Spleen (tissue), 13 donors: ENCODE measurements at regions of chr12 and their contacts with region 1.

Region 1: DNA sequence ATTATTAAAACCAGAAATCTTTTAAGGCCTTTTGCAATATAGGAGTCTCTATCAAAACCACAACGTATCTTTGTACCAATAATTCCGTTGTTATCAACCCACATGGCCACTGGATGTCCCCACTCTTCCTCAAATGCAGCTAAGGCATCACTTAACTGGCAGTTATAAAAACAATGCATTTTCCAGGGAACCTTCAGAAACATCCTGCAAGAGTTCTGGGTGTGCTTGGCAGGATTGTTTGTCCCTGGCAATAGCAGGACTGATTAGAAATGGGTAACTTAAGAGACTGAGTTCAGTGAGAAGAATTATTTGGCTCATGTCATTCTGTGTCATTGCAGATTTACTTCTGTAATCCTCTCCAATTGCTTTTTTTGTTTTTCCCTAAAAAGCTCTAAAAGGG is 112.0 kb downstream of the SLC15A5 start:
- DNase-seq: no peak
- H3K4me3 ChIP-seq: no peak overlapping the region
- H3K27ac ChIP-seq: no peak overlapping the region
- H3K4me1 ChIP-seq: no peaks in the 10 kb centered on the region
- H3K27me3 ChIP-seq: no peaks in the 10 kb centered on the region
- CTCF ChIP-seq: peak in 1 of 11 experiments; percentile 46
- POLR2A ChIP-seq: no peak

Region 2: DNA sequence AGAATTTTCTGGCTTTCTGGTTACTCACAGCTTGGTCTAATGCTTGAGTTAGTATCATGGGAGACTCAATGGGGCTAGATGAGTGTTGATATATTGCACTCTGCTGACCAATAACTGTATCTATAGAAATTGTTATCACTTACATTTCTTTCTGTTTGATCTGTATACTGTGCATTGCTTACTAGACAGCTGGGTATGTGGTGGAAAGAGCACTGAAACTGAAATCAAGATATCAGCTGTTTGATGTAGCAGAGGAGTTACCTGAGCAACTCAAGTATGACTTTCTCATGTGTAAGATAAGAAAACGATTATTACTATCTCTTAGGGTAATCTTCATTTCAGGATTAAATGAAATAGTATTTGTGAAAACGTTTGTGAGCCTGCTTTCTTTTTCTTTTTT is 71.1 kb before region 1 on chr12:
- intact Hi-C with region 1: no loop called
- DNase-seq: no peak
- H3K4me3 ChIP-seq: no peak overlapping the region
- H3K27ac ChIP-seq: no peak overlapping the region
- H3K4me1 ChIP-seq: no peaks in the 10 kb centered on the region
- H3K27me3 ChIP-seq: no peaks in the 10 kb centered on the region
- CTCF ChIP-seq: no peak
- POLR2A ChIP-seq: no peak

Region 3: GRCh38 chr12:16272222-16272621 is 106.7 kb after region 1 on chr12:
- intact Hi-C with region 1: no loop called
- DNase-seq: no peak
- H3K4me3 ChIP-seq: no peak overlapping the region
- H3K27ac ChIP-seq: no peak overlapping the region
- H3K4me1 ChIP-seq: no peaks in the 10 kb centered on the region
- H3K27me3 ChIP-seq: no peaks in the 10 kb centered on the region
- CTCF ChIP-seq: no peak
- POLR2A ChIP-seq: no peak

Region 4: DNA sequence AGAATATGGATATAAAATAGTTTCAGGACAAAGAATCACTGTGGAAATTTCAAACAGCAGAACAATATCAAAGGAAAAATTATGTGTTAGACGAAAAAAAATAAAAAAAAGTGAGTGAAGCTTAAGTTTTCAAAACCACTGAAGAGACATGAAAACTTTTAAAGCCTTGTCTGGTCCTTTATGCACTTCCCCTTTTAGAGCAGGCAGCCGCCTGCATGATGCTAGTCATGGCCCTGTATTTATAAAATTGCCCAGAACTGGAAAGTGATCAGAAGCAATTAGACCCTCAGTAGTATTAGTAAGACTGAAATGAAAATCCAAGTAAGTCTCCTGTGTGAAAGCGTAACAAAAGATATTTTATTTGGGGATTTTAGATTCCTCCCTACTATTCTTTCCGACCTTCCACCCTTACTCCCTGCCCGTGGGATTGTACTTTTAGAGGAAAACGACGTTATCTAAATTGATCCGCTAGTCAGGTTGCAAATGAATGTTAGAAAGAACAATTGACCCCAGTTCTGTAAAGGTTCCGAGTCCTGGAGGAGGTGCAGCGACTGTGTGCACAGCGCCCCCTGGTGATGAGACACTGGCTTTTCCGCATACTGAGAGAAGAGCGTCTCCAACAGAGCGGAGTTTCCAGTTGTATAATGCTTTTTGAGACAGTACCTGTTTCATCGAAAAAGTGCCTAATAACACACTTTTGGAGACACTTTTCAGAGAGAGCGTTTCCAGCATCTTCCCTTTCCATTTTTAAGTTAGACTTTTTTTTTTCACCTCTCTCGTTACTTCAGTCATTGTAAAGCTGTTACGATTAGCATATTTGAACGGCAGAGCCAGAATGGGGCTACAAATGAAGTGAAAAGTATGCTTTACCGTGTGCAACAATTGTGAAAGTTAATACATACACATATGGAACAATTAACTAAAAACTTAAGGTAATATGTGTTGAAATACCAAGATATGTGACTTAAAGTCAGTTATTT is 194.3 kb after region 1 on chr12:
- intact Hi-C with region 1: loop called (anchors 10 kb)
- DNase-seq: peak; percentile 86
- H3K4me3 ChIP-seq: no peak overlapping the region
- H3K27ac ChIP-seq: no peak overlapping the region
- H3K4me1 ChIP-seq: peaks cover 0 to 5% (median 0%) of the 10 kb centered on the region in 6 donors
- H3K27me3 ChIP-seq: no peaks in the 10 kb centered on the region
- CTCF ChIP-seq: peak in 10 of 11 experiments; percentile 7 to 75 (median 60)
- POLR2A ChIP-seq: no peak